Tibial artery (tissue), 4 donors: ENCODE measurements at regions of chr22 and their contacts with region 1.

Region 1: GRCh38 chr22:35430897-35431322 is 31.0 kb downstream of the MCM5 start:
- DNase-seq: peak; percentile 80 to 91
- H3K4me3 ChIP-seq: no peak overlapping the region
- H3K27ac ChIP-seq: no peak overlapping the region
- H3K4me1 ChIP-seq: peaks cover 0 to 6% (median 2%) of the 10 kb centered on the region in 4 donors
- H3K27me3 ChIP-seq: no peaks in the 10 kb centered on the region
- CTCF ChIP-seq: peak; percentile 98 to 99

Region 2: DNA sequence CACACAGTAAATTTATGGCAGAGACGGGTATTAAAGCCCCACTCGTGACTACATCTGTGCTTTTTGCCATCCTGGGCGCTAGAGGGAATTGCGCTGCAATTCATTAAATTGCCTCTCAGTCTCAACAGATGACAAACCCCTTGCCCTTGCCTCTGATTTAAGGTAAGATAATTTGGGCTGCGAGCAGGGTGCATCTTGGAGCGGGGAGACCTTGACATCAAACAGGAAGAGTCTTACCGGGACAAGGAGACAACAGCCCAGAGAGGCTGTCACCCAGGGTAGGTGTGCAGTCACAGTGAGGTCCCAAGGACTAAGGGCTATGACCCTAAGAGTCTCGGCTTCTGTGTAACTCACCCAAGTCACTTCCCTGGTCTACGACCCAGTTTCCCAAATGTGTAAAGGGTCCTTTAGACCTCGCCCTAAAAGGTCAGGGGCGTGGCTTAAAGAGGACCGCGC is 131.7 kb before region 1 on chr22:
- intact Hi-C with region 1: no loop called
- DNase-seq: no peak
- H3K4me3 ChIP-seq: peak overlapping the region; percentile 69 to 87
- H3K27ac ChIP-seq: peak overlapping the region; percentile 97
- H3K4me1 ChIP-seq: peaks cover 0 to 22% (median 11%) of the 10 kb centered on the region in 4 donors
- H3K27me3 ChIP-seq: no peaks in the 10 kb centered on the region
- CTCF ChIP-seq: peak; percentile 11 to 13

Region 3: DNA sequence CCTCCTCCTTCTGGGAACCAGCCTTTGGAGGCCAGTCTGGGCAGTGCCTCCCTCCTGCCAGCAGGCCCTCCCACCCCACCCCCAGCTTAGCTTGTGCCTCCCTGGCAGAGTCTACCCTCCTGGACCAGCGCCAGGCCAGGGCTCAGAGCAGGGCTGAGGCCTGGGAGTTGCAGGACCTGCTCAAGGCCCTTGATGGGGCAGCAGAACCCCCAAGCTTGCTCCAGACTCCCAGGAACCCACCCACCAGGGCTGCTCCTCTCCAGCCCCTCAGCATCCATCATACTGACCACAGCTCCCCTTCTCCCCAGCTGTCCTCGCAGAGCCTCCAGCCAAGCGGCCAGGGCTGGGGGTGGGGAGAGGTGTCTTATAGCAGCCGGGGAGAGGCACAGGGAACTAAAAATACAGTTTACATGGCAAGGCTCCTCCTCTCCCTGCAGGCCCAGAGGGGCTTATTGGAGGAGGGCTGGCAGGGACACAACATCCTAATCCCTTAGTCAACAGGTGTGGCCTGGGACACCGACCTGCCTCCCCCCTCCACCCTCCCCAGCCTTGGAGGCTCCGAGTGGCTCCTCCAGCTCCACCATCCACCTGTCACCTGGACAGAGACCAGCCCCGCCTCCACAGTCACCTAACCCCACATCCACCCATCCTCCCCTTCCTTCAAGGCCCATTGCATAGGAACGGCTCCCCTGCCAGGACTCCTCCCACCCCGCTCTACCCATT is 191.4 kb after region 1 on chr22:
- intact Hi-C with region 1: loop called (anchors 5 kb)
- DNase-seq: no peak
- H3K4me3 ChIP-seq: no peak overlapping the region
- H3K27ac ChIP-seq: peak overlapping the region in 1 of 2 donors; percentile 9
- H3K4me1 ChIP-seq: peaks cover 0 to 31% (median 24%) of the 10 kb centered on the region in 4 donors
- H3K27me3 ChIP-seq: no peaks in the 10 kb centered on the region
- CTCF ChIP-seq: no peak